Calu3 (cell line): ENCODE measurements at regions of chr2 and their contacts with region 1.

Region 1: DNA sequence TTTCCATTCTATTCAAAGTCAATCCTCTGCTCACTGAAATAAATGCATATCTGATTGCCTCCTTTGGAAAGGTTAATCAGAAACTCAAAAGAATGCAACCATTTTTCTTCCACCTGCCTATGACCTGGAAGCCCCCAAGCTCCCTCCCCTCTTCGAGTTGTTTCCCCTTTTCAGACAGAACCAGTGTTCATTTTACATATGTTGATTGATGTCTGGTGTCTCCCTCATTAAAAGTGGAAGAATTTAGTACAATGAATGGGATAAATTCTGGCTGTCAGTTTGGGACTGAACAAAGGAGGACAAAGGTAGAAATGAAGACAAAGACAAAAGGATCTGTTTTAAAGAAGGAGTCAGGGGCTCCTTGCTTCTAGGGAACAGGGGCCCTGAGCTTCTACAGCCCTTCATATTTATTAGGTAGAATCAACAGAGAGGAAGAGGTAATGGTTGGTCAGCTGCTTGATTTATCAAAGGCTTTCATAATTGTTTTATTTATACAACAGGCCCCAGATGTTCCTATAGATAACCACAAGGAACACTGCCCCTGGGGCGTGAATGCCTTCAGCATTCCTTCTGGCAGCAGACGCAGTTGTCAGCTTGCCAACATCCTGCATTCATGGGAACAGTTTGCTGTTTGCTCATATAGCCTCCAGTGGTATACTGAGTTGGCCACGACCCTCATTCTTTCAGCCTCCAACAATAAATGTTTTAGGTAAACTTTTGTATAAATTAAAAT is 949.8 kb upstream of the LRATD1 start:
- DNase-seq: peak; percentile 79
- H3K4me3 Mint-ChIP-seq: no peak overlapping the region
- H3K27ac Mint-ChIP-seq: peak overlapping the region; percentile 15
- H3K4me1 Mint-ChIP-seq: peaks cover 14% of the 10 kb centered on the region
- H3K27me3 Mint-ChIP-seq: no peaks in the 10 kb centered on the region
- CTCF ChIP-seq: no peak

Region 2: GRCh38 chr2:13539296-13539695 is 143.4 kb before region 1 on chr2:
- CTCF ChIA-PET with region 1: no interaction called
- intact Hi-C with region 1: loop called (anchors 5 kb)
- DNase-seq: no peak
- H3K4me3 Mint-ChIP-seq: peak overlapping the region; percentile 69
- H3K27ac Mint-ChIP-seq: peak overlapping the region; percentile 23
- H3K4me1 Mint-ChIP-seq: peaks cover 42% of the 10 kb centered on the region
- H3K27me3 Mint-ChIP-seq: no peaks in the 10 kb centered on the region
- CTCF ChIP-seq: no peak

Region 3: GRCh38 chr2:13558368-13558767 is 124.3 kb before region 1 on chr2:
- CTCF ChIA-PET with region 1: no interaction called
- intact Hi-C with region 1: loop called (anchors 5 kb)
- DNase-seq: peak; percentile 76
- H3K4me3 Mint-ChIP-seq: peak overlapping the region; percentile 36
- H3K27ac Mint-ChIP-seq: peak overlapping the region; percentile 95
- H3K4me1 Mint-ChIP-seq: peaks cover 42% of the 10 kb centered on the region
- H3K27me3 Mint-ChIP-seq: no peaks in the 10 kb centered on the region
- CTCF ChIP-seq: no peak